ENCODE measurements at regions of chr15 and their contacts with region 1.

Region 1: GRCh38 chr15:73254598-73254997 is 114.2 kb downstream of the HCN4 start:
- DNase-seq: no peak
- H3K4me3 Mint-ChIP-seq: no peak overlapping the region
- H3K27ac Mint-ChIP-seq: no peak overlapping the region
- H3K4me1 Mint-ChIP-seq: no peaks in the 10 kb centered on the region
- H3K27me3 Mint-ChIP-seq: no peaks in the 10 kb centered on the region

Region 2: GRCh38 chr15:73265536-73266153 is 11.0 kb after region 1 on chr15:
- CTCF ChIA-PET with region 1: interaction called, 16 read pairs
- intact Hi-C with region 1: no loop called
- DNase-seq: peak; percentile 75
- H3K4me3 Mint-ChIP-seq: no peak overlapping the region
- H3K27ac Mint-ChIP-seq: no peak overlapping the region
- H3K4me1 Mint-ChIP-seq: peaks cover 2% of the 10 kb centered on the region
- H3K27me3 Mint-ChIP-seq: no peaks in the 10 kb centered on the region

Measured in activated naive CD4-positive, alpha-beta T cell treated with anti-CD3 and anti-CD28 coated beads for 36 hours (primary cell).